A673 (cell line): ENCODE measurements at regions of chr2 and their contacts with region 1.

Region 1: GRCh38 chr2:222604749-222605515 is 51.0 kb downstream of the FARSB start:
- DNase-seq: no peak
- H3K4me3 ChIP-seq: no peak overlapping the region
- H3K27ac ChIP-seq: no peak overlapping the region
- H3K4me1 ChIP-seq: peaks cover 7% of the 10 kb centered on the region
- H3K27me3 ChIP-seq: no peaks in the 10 kb centered on the region
- CTCF ChIP-seq: no peak

Region 2: GRCh38 chr2:222134654-222135053 is 470.3 kb before region 1 on chr2:
- CTCF ChIA-PET with region 1: no interaction called
- POLR2A ChIA-PET with region 1: interaction called, 18 read pairs
- intact Hi-C with region 1: no loop called
- DNase-seq: no peak
- H3K4me3 ChIP-seq: no peak overlapping the region
- H3K27ac ChIP-seq: no peak overlapping the region
- H3K4me1 ChIP-seq: peaks cover 13% of the 10 kb centered on the region
- H3K27me3 ChIP-seq: no peaks in the 10 kb centered on the region
- CTCF ChIP-seq: no peak

Region 3: GRCh38 chr2:222381566-222381965 is 223.4 kb before region 1 on chr2:
- CTCF ChIA-PET with region 1: no interaction called
- POLR2A ChIA-PET with region 1: no interaction called
- intact Hi-C with region 1: no loop called
- DNase-seq: no peak
- H3K4me3 ChIP-seq: no peak overlapping the region
- H3K27ac ChIP-seq: no peak overlapping the region
- H3K4me1 ChIP-seq: no peaks in the 10 kb centered on the region
- H3K27me3 ChIP-seq: no peaks in the 10 kb centered on the region
- CTCF ChIP-seq: no peak

Region 4: DNA sequence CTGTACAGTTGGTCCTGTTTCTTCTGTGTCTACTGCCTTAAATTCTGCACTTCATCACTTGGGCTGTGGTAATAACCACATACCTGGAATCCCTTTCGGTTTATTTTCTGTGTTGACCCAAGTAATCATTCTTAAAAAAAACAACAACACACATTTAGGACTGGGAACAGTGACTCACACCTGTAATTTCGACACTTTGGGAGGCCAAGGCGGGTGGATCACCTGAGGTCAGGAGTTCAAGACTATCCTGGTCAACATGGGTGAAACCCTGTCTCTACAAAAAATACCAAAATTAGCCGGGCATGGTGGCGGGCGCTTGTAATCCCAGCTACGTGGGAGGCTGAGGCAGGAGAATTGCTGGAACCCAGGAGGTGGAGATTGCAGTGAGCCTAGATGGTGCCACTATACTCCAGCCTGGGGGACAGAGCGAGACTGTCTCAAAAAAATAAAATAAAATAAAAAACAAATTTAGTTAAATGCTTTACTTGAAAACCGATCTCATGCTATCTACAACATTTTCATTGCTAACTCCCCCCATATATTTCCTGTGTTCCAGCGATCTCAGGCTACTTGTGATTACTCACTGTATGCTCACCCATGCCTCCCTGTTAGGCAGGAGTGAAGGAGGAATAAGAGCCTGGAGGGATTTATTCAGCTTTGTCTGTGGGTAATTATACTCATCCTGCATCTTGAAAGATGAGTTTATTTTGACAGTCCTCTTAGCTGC is 274.1 kb after region 1 on chr2:
- CTCF ChIA-PET with region 1: no interaction called
- POLR2A ChIA-PET with region 1: no interaction called
- intact Hi-C with region 1: no loop called
- DNase-seq: no peak
- H3K4me3 ChIP-seq: no peak overlapping the region
- H3K27ac ChIP-seq: no peak overlapping the region
- H3K4me1 ChIP-seq: peaks cover 43% of the 10 kb centered on the region
- H3K27me3 ChIP-seq: no peaks in the 10 kb centered on the region
- CTCF ChIP-seq: no peak